ENCODE measurements at regions of chr16 and their contacts with region 1.

Region 1: GRCh38 chr16:86300746-86301481 is 209.4 kb upstream of the FOXF1 start:
- DNase-seq: no peak
- H3K4me3 ChIP-seq: no peak overlapping the region
- H3K27ac ChIP-seq: peak overlapping the region; percentile 52 to 68
- H3K4me1 ChIP-seq: no peaks in the 10 kb centered on the region
- H3K27me3 ChIP-seq: peaks cover 5% of the 10 kb centered on the region
- CTCF ChIP-seq: no peak
- POLR2A ChIP-seq: no peak

Region 2: GRCh38 chr16:86158688-86159360 is 142.1 kb before region 1 on chr16:
- intact Hi-C with region 1: no loop called
- DNase-seq: no peak
- H3K4me3 ChIP-seq: no peak overlapping the region
- H3K27ac ChIP-seq: peak overlapping the region in 1 of 2 donors; percentile 2
- H3K4me1 ChIP-seq: no peaks in the 10 kb centered on the region
- H3K27me3 ChIP-seq: peaks cover 3% of the 10 kb centered on the region
- CTCF ChIP-seq: no peak
- POLR2A ChIP-seq: no peak

Region 3: DNA sequence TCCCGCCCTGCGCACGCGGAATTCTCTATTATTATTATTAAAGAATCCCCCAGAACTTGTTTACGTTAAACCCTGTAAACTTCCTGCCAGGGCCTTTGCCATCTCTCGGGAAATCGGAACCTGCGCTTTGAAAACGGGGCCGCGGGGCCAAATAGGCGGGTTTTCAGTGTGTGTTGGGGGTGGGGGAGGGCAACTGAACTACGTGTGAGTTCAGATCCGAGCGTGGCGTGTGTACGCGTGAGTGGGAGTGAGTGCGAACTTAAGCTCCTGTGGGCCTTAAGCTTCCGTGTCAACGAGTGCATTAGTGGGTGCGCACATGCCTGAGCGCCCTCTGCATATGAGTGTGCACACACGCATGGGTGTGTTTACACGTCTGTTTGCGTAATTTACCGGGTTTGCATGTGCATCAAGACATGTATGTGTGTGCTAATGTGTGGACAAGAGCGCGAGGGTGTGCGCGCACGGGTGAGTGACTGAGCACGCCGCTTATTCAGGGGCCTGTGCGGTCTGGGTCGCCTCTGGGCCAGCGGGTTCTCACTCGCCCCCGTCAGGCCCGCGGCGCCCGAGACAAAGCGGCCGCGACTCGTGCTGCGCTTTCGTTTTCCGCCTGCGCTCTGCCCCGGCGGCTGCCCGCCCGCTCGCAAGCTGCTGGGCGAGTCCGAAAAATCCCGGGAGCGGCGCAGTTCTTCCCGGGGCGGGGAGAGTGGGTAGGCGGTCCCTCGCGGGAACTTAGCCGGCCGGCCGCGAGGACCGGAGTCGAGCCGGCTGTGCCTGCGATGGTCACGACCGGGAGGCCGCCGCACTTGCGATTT is 208.2 kb after region 1 on chr16:
- intact Hi-C with region 1: loop called (anchors 5 kb)
- DNase-seq: no peak
- H3K4me3 ChIP-seq: peak overlapping the region; percentile 45 to 48
- H3K27ac ChIP-seq: peak overlapping the region; percentile 85 to 87
- H3K4me1 ChIP-seq: peaks cover 8% of the 10 kb centered on the region
- H3K27me3 ChIP-seq: peaks cover 49% of the 10 kb centered on the region
- CTCF ChIP-seq: no peak
- POLR2A ChIP-seq: no peak